Heart left ventricle (tissue), 16 donors: ENCODE measurements at regions of chr7 and their contacts with region 1.

Region 1: GRCh38 chr7:102390697-102391484 is 5.3 kb upstream of the PRKRIP1 start:
- DNase-seq: peak; percentile 76 to 90 (median 82)
- ATAC-seq: peak; percentile 51 to 85 (median 82)
- H3K4me3 ChIP-seq: no peak overlapping the region
- H3K27ac ChIP-seq: no peak overlapping the region
- H3K4me1 ChIP-seq: peaks cover 0 to 11% (median 4%) of the 10 kb centered on the region in 12 donors
- H3K27me3 ChIP-seq: no peaks in the 10 kb centered on the region
- CTCF ChIP-seq: peak; percentile 85 to 95 (median 91)
- POLR2A ChIP-seq: no peak

Region 2: GRCh38 chr7:102248456-102249395 is 142.2 kb before region 1 on chr7:
- intact Hi-C with region 1: no loop called
- DNase-seq: no peak
- ATAC-seq: no peak
- H3K4me3 ChIP-seq: no peak overlapping the region
- H3K27ac ChIP-seq: no peak overlapping the region
- H3K4me1 ChIP-seq: no peaks in the 10 kb centered on the region
- H3K27me3 ChIP-seq: no peaks in the 10 kb centered on the region
- CTCF ChIP-seq: no peak
- POLR2A ChIP-seq: no peak

Region 3: GRCh38 chr7:102279537-102280400 is 111.1 kb before region 1 on chr7:
- intact Hi-C with region 1: loop called (anchors 1 to 2 kb)
- DNase-seq: peak in 4 of 5 donors; percentile 43 to 81 (median 50)
- ATAC-seq: peak in 3 of 4 donors; percentile 73 to 79 (median 77)
- H3K4me3 ChIP-seq: no peak overlapping the region
- H3K27ac ChIP-seq: no peak overlapping the region
- H3K4me1 ChIP-seq: peaks cover 0 to 10% (median 0%) of the 10 kb centered on the region in 12 donors
- H3K27me3 ChIP-seq: no peaks in the 10 kb centered on the region
- CTCF ChIP-seq: peak; percentile 68 to 88 (median 83)
- POLR2A ChIP-seq: no peak

Region 4: GRCh38 chr7:102286237-102287110 is 104.4 kb before region 1 on chr7 and contains the start of gene SH2B2:
- intact Hi-C with region 1: loop called in 3 of 10 experiments (anchors 2 kb)
- DNase-seq: peak; percentile 67 to 85 (median 79)
- ATAC-seq: peak; percentile 39 to 76 (median 72)
- H3K4me3 ChIP-seq: peak within 1 kb of the TSS; percentile 67 to 95 (median 81)
- H3K27ac ChIP-seq: peak within 1 kb of the TSS; percentile 68 to 97 (median 90)
- H3K4me1 ChIP-seq: peaks cover 7 to 42% (median 24%) of the 10 kb centered on the region in 12 donors
- H3K27me3 ChIP-seq: no peaks in the 10 kb centered on the region
- CTCF ChIP-seq: peak in 2 of 12 donors; percentile 10 to 14
- POLR2A ChIP-seq: peak in 1 of 2 donors; percentile 72
- total RNA-seq, gene SH2B2: 1.00 to 5.7 (median 2.5) TPM